Calu3 (cell line): ENCODE measurements at regions of chr11 and their contacts with region 1.

Region 1: GRCh38 chr11:2151500-2152257 is 9.3 kb downstream of the INS start:
- DNase-seq: peak; percentile 80
- H3K4me3 Mint-ChIP-seq: no peak overlapping the region
- H3K27ac Mint-ChIP-seq: no peak overlapping the region
- H3K4me1 Mint-ChIP-seq: no peaks in the 10 kb centered on the region
- H3K27me3 Mint-ChIP-seq: peaks cover 87% of the 10 kb centered on the region
- CTCF ChIP-seq: peak; percentile 81

Region 2: GRCh38 chr11:1652771-1653540 is 498.7 kb before region 1 on chr11:
- CTCF ChIA-PET with region 1: interaction called, 54 read pairs
- intact Hi-C with region 1: loop called (anchors 5 kb)
- DNase-seq: peak; percentile 83
- H3K4me3 Mint-ChIP-seq: no peak overlapping the region
- H3K27ac Mint-ChIP-seq: no peak overlapping the region
- H3K4me1 Mint-ChIP-seq: no peaks in the 10 kb centered on the region
- H3K27me3 Mint-ChIP-seq: peaks cover 75% of the 10 kb centered on the region
- CTCF ChIP-seq: peak; percentile 98

Region 3: DNA sequence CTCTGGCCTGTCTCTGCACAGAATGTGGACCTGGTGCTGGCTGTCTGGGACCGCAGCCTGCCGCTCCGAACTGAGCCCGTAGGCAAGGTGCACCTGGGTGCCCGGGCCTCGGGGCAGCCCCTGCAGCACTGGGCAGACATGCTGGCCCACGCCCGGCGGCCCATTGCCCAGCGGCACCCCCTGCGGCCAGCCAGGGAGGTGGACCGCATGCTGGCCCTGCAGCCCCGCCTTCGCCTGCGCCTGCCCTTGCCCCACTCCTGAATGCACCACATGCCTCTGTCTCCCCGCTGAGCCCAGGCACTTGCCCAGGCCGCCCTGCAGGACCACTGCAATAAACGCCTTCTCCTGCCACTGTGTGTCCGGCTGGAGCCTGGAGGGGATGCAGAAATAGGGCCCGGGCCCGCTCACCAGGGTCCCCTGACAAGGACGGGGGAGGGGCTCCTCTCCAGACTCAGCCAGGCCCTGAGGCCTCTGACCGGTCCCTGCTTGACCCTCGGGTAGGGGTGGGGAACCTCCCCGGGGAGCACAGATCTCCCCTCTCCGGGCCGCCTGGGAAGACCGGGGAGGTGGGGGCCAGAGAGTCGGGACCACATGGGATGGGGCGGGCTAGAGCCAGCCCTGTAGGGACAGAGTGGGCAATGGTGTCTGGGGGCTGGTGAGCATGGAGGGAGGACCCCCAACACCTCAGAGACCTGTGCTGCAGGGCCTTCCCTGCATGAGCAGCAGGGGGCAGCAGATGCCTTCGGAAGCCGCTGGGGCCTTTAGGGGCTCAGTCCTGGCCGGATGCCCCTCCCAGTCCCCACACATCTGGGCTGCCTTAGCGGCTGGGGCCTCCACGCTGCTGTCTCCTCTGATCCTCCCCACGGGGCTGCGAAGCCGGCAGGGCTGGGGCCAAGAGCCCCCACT is 314.3 kb before region 1 on chr11:
- CTCF ChIA-PET with region 1: interaction called, 5 read pairs
- intact Hi-C with region 1: loop called (anchors 5 kb)
- DNase-seq: peak; percentile 76
- H3K4me3 Mint-ChIP-seq: no peak overlapping the region
- H3K27ac Mint-ChIP-seq: no peak overlapping the region
- H3K4me1 Mint-ChIP-seq: peaks cover 19% of the 10 kb centered on the region
- H3K27me3 Mint-ChIP-seq: no peaks in the 10 kb centered on the region
- CTCF ChIP-seq: peak; percentile 89

Region 4: DNA sequence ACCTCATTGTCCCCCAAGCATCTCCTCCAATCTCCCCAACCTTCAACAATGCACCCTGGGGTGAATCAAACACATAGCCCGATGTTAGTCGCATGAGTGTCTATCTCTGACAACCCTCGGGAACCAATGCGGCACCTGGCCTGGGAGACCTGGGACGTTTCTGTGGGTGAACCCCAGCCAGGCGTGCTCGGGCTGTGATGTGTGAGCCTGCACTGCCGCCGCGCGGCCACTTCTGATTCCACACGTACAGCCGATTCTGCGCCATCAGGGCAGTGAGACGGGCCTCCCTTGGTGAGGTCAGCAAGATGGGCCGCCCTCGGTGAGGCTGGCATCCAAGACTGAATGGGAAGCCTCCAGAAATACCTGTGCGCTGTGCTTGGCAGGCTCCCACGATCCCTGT is 148.9 kb before region 1 on chr11:
- CTCF ChIA-PET with region 1: interaction called, 22 read pairs
- intact Hi-C with region 1: no loop called
- DNase-seq: no peak
- H3K4me3 Mint-ChIP-seq: no peak overlapping the region
- H3K27ac Mint-ChIP-seq: no peak overlapping the region
- H3K4me1 Mint-ChIP-seq: no peaks in the 10 kb centered on the region
- H3K27me3 Mint-ChIP-seq: no peaks in the 10 kb centered on the region
- CTCF ChIP-seq: no peak

Region 5: DNA sequence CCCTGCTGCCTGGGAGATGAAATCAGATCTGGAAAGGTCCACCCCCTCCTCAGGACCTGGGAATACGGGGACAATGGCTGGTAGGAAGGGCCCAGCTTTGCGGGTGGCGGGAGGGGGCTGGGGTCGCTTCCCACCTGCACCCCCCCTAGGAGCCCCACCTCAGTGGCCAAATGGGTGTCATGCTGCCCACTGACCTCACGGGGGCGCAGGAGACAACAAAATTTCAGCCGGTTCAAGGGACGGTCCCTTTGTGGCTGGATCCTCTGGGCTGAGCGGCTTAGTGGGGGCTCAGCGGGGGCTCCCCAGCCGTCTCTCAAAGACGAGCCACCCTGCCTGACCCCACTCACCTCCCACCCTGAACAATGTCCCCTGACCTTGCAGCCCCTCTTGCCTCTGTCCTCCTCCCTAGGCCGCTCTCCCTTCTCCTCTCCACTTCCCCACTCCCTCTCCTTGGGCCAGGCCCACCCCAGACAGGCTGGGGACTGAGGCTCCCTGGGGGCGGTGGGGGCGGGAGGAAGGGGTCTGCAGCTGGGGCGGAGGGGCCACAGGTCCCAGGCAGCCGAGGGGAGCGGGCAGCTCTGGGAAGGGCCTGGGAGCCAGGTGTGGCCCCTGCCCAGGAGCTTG is 114.7 kb before region 1 on chr11:
- CTCF ChIA-PET with region 1: interaction called, 159 read pairs
- intact Hi-C with region 1: no loop called
- DNase-seq: no peak
- H3K4me3 Mint-ChIP-seq: no peak overlapping the region
- H3K27ac Mint-ChIP-seq: no peak overlapping the region
- H3K4me1 Mint-ChIP-seq: no peaks in the 10 kb centered on the region
- H3K27me3 Mint-ChIP-seq: no peaks in the 10 kb centered on the region
- CTCF ChIP-seq: no peak